ENCODE measurements at regions of chr1 and their contacts with region 1.

Region 1: GRCh38 chr1:185681034-185681633 is 53.1 kb upstream of the HMCN1 start:
- DNase-seq: no peak
- H3K4me3 ChIP-seq: no peak overlapping the region
- H3K27ac ChIP-seq: no peak overlapping the region
- H3K4me1 ChIP-seq: no peaks in the 10 kb centered on the region; a peak in 2 of 7 replicates
- H3K27me3 ChIP-seq: no peaks in the 10 kb centered on the region
- CTCF ChIP-seq: peak in 2 of 3 experiments; percentile 65; a peak in 3 of 4 replicates
- EP300 ChIP-seq: no peak
- POLR2A ChIP-seq: no peak
- RAD21 ChIP-seq: peak; percentile 82 to 83

Region 2: GRCh38 chr1:185317034-185317885 is 363.9 kb before region 1 on chr1 and contains the start of gene IVNS1ABP:
- CTCF ChIA-PET with region 1: interaction called, 14 read pairs
- POLR2A ChIA-PET with region 1: no interaction called
- DNase-seq: peak; percentile 88 to 93
- H3K4me3 ChIP-seq: peak within 1 kb of the TSS; percentile 89 to 97 (median 92)
- H3K27ac ChIP-seq: peak within 1 kb of the TSS; percentile 92
- H3K4me1 ChIP-seq: peaks cover 0 to 4% (median 3%) of the 10 kb centered on the region in 4 experiments; a peak in 5 of 7 replicates
- H3K27me3 ChIP-seq: no peaks in the 10 kb centered on the region
- CTCF ChIP-seq: peak; percentile 47 to 68 (median 64)
- EP300 ChIP-seq: peak in 1 of 2 experiments; percentile 56; a peak in 1 of 3 replicates
- POLR2A ChIP-seq: peak; percentile 86 to 95
- RAD21 ChIP-seq: peak; percentile 73
- total RNA-seq, gene IVNS1ABP: 175 and 189 TPM in 2 replicates

Region 3: DNA sequence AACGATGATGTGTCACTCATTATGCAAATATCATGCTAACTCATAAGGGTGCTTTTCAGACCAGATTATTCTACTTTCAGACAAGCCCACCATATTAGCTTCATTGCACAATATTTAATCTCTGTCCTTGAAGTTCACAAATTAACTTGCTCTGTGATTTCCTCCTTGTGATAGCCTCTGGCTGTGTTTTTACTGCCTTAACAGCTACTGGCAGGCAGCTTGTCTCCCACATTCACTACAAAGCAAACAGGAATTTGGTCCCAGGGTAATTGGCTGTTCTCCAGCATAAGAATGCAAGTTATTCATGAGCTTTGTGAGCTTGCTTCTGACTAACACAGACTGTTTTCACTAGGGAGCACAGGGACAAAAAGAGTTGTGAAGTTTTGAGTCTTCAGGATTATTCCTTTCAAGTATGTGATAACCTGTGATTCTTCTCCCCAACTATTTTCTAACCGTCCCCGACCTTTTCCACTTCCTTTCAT is 34.9 kb before region 1 on chr1:
- CTCF ChIA-PET with region 1: interaction called, 20 read pairs
- POLR2A ChIA-PET with region 1: no interaction called
- DNase-seq: peak in 1 of 2 experiments; percentile 83
- H3K4me3 ChIP-seq: peak overlapping the region in 1 of 4 experiments; percentile 45; a peak in 1 of 8 replicates
- H3K27ac ChIP-seq: peak overlapping the region; percentile 66; the same call in 1 of the 2 replicates
- H3K4me1 ChIP-seq: peaks cover 0 to 13% (median 6%) of the 10 kb centered on the region in 4 experiments; a peak in 4 of 7 replicates
- H3K27me3 ChIP-seq: no peaks in the 10 kb centered on the region
- CTCF ChIP-seq: no peak
- EP300 ChIP-seq: 0 out of 3 replicates have a peak, but pooled peaks of 1 of the 2 experiments have one; percentile 60
- POLR2A ChIP-seq: peak in 1 of 2 experiments; percentile 43; a peak in 1 of 3 replicates
- RAD21 ChIP-seq: 0 out of 4 replicates have a peak, but pooled peaks of 1 of the 2 experiments have one; percentile 13

Region 4: DNA sequence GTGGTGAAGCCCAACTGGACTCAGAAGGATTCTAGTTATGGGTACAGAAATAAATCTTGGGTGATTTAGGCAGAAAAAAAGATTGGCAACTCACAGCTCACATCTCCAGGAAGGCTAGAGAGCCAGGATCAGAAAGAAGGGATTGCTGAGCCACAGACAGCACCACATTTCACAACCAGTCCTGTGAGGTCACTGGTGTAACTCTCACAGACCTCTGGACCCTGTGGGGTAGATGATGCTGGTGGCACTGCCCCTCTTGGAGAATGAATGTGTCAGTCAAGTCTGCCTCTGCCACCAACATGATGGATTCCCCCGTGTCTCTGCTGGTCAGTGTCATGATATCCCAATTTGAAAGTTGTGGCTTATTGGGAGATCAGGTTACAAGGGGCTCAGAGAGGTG is 17.8 kb before region 1 on chr1:
- CTCF ChIA-PET with region 1: interaction called, 14 read pairs
- POLR2A ChIA-PET with region 1: no interaction called
- DNase-seq: no peak
- H3K4me3 ChIP-seq: no peak overlapping the region
- H3K27ac ChIP-seq: no peak overlapping the region
- H3K4me1 ChIP-seq: peaks cover 0 to 4% (median 1%) of the 10 kb centered on the region in 4 experiments; a peak in 4 of 7 replicates
- H3K27me3 ChIP-seq: no peaks in the 10 kb centered on the region
- CTCF ChIP-seq: no peak
- EP300 ChIP-seq: no peak
- POLR2A ChIP-seq: no peak
- RAD21 ChIP-seq: no peak

Region 5: GRCh38 chr1:185694081-185694480 is 12.9 kb after region 1 on chr1:
- CTCF ChIA-PET with region 1: interaction called, 18 read pairs
- POLR2A ChIA-PET with region 1: no interaction called
- DNase-seq: no peak
- H3K4me3 ChIP-seq: no peak overlapping the region
- H3K27ac ChIP-seq: no peak overlapping the region
- H3K4me1 ChIP-seq: no peaks in the 10 kb centered on the region
- H3K27me3 ChIP-seq: peaks cover 0 to 1% (median 0%) of the 10 kb centered on the region in 4 experiments; a peak in 2 of 7 replicates
- CTCF ChIP-seq: no peak
- EP300 ChIP-seq: no peak
- POLR2A ChIP-seq: no peak
- RAD21 ChIP-seq: no peak